ENCODE measurements at regions of chr13 and their contacts with region 1.

Region 1: GRCh38 chr13:33723772-33724435 is 94.0 kb upstream of the RFC3 start:
- DNase-seq: peak; percentile 68 to 84 (median 79)
- ATAC-seq: peak; percentile 80 to 88 (median 85)
- H3K4me3 ChIP-seq: no peak overlapping the region
- H3K27ac ChIP-seq: peak overlapping the region in 11 of 12 donors; percentile 11 to 83 (median 63)
- H3K4me1 ChIP-seq: peaks cover 0 to 54% (median 36%) of the 10 kb centered on the region in 12 donors
- H3K27me3 ChIP-seq: no peaks in the 10 kb centered on the region
- CTCF ChIP-seq: peak; percentile 68 to 88 (median 80)
- POLR2A ChIP-seq: no peak

Region 2: DNA sequence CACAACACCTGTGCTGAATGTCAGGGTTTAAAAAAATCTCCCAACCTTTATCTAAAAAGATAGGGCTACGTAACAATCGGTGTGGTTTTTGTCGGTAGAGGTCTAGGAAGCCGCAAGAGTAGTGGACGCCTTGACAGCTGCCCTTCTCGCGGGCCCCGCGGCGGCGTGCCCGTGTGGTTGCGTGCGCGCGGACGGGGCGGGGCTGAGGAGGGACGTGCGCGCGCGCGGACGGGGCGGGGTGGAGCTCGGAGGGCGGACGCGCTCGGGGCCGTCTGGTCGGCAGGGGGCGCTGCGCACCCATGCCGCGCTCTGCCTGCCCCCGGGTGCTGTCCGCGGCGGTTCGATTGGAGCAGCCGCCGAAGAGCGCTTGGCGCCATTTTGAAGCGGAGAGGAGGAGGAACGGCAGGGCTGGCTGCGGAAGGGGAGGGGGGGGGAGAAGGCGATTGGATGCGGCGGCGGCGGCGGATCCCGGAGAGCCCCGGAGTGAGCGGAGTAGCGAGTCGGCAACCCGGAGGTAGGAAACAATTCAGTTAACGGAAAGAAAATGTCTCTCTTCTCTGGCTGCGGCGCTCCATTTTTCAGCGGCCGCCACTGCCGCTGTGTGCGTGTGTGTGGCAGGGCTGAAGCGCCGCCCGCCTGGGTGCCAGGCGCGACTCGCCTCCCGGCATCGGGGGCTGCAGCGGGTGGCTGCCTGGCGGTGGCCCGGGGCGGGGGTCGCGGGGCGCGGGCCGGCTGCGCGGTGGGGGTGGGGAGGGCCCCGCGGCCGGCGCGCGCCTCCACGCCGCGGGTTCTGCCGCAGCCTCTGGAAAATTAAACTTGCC is 1137.6 kb before region 1 on chr13 and contains the start of gene PDS5B:
- intact Hi-C with region 1: loop called in 6 of 10 experiments (anchors 2 to 10 kb)
- DNase-seq: peak; percentile 95 to 98 (median 96)
- ATAC-seq: peak; percentile 95 to 99 (median 96)
- H3K4me3 ChIP-seq: peak within 1 kb of the TSS; percentile 66 to 95 (median 84)
- H3K27ac ChIP-seq: peak within 1 kb of the TSS; percentile 86 to 96 (median 93)
- H3K4me1 ChIP-seq: peaks cover 0 to 38% (median 27%) of the 10 kb centered on the region in 12 donors
- H3K27me3 ChIP-seq: no peaks in the 10 kb centered on the region
- CTCF ChIP-seq: peak; percentile 66 to 97 (median 94)
- POLR2A ChIP-seq: peak in 1 of 2 donors; percentile 81
- total RNA-seq, gene PDS5B: 12.0 to 28.8 (median 19.4) TPM

Region 3: DNA sequence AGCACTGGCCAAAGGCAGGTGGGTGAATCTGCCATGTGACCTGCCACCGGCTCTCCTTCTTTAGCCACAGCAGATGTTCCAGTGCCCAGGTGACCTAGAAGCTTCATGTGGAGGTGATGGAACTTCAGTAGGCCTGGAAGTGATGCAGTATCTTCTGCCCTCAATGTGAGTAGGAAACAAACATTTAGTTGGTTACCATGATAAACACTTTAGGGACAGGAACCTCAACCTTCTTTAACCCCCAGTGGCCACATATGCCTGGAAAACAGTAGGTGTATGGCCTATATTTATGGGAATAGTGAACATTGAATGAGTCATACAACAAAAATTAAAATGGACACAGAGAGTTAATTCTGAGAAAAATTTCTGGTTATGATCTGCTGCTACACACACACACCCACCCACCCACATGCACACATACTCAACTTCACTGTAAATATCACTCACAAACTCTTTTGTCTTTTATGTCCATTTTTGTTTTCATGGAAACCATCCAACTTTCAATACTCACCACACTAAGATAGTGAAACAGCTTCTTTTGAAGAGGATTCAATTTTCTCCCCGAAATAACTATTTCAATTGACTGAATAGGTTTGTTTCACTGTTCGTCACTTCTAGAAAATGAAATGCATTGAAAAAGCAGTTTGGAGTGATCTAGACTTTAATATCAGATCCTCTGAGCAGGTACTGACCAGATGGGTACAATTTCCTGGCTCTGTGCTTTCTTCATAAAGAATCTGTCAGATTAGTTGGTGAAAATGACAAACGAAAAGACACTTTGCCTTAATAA is 535.6 kb before region 1 on chr13:
- intact Hi-C with region 1: loop called in 1 of 10 experiments (anchors 5 kb)
- DNase-seq: no peak
- ATAC-seq: no peak
- H3K4me3 ChIP-seq: no peak overlapping the region
- H3K27ac ChIP-seq: peak overlapping the region in 9 of 12 donors; percentile 25 to 77 (median 41)
- H3K4me1 ChIP-seq: peaks cover 3 to 91% (median 68%) of the 10 kb centered on the region in 12 donors
- H3K27me3 ChIP-seq: no peaks in the 10 kb centered on the region
- CTCF ChIP-seq: no peak
- POLR2A ChIP-seq: no peak

Region 4: DNA sequence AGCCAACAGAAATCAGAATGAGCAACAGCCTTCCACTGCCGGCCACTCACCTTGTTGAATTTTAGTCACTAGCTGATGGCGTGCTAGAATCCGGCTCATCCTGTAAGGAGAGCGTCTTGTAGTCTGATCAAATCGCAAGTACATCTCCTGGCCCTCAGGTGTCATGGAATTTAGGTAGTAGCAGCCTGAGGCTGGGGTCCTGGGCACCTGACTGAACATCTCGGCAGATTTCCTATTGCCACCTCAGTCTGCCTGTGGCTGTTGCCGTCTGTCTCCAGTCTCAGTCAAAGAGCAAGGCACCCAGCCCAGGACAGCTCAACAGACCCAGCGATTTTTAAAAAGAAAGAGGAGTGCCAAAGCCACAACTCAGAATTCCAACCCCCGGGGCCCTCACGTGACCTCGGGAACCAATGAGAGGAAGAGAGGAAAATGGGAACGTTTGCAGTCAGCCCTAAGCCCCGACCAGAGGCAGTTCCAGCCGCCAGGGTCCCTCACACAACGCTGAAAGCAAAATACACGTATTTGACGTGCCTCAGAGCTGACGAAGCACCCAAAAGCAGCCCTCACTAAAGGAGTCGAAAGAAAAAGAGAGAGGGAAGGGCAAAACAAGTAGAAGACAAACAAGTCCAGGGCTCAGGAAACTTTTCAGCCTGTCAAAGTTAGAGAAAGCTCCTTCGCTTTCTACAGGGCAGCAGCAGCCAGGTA is 438.3 kb before region 1 on chr13 and contains the start of gene STARD13:
- intact Hi-C with region 1: loop called in 1 of 10 experiments (anchors 10 kb)
- DNase-seq: peak; percentile 92 to 96 (median 95)
- ATAC-seq: peak; percentile 93 to 97 (median 95)
- H3K4me3 ChIP-seq: peak within 1 kb of the TSS; percentile 50 to 84 (median 68)
- H3K27ac ChIP-seq: peak within 1 kb of the TSS; percentile 89 to 98 (median 96)
- H3K4me1 ChIP-seq: peaks cover 0 to 56% (median 33%) of the 10 kb centered on the region in 12 donors
- H3K27me3 ChIP-seq: no peaks in the 10 kb centered on the region
- CTCF ChIP-seq: peak in 11 of 12 donors; percentile 11 to 68 (median 46)
- POLR2A ChIP-seq: peak in 1 of 2 donors; percentile 95
- total RNA-seq, gene STARD13: 18.6 to 39.2 (median 31.6) TPM

Region 5: GRCh38 chr13:33610471-33611015 is 113.4 kb before region 1 on chr13:
- intact Hi-C with region 1: loop called in 4 of 10 experiments (anchors 5 to 10 kb)
- DNase-seq: peak; percentile 64 to 89 (median 85)
- ATAC-seq: peak; percentile 86 to 88 (median 87)
- H3K4me3 ChIP-seq: peak overlapping the region in 11 of 12 donors; percentile 3 to 54 (median 40)
- H3K27ac ChIP-seq: peak overlapping the region; percentile 85 to 98 (median 92)
- H3K4me1 ChIP-seq: peaks cover 0 to 55% (median 27%) of the 10 kb centered on the region in 12 donors
- H3K27me3 ChIP-seq: no peaks in the 10 kb centered on the region
- CTCF ChIP-seq: peak in 4 of 12 donors; percentile 11 to 38 (median 19)
- POLR2A ChIP-seq: no peak

Region 6: DNA sequence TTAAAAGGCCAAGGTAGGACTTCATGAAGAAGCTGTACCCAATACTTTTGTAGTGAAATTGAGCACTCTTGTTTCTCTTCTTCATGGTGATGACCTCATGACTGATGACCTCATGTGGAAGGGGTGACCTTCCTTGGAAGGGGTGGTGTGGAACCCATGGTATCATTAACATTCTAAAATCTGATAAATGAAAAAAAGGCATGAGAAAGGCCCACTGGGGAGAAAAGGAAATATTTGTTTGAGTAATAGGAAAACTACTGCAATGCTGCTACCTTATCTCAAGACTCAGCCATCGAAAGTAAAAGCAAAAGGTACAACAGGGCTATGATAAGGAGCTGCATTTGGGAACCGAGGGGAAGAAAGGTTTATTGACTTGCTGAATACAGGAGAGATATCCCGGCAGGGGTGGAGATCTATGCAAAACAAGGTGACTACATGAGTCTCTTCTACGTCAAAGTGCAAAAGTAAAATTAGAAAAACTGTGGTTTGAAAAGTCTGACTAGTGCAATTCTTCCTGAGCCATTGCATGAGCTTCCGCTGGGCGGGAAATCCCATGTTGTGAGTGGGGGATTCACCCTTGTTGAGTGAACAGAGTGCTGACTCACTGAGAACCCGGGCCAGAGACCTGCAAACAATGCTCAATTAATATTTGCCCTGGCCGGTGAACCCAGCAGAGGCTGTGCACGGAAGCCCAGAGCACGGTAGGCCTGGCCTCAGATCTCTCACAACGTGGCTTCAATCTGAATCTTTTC is 44.8 kb before region 1 on chr13:
- intact Hi-C with region 1: loop called in 5 of 10 experiments (anchors 2 to 10 kb)
- DNase-seq: peak; percentile 51 to 66 (median 61)
- ATAC-seq: peak in 3 of 4 donors; percentile 44 to 75 (median 67)
- H3K4me3 ChIP-seq: peak overlapping the region in 6 of 12 donors; percentile 7 to 37 (median 22)
- H3K27ac ChIP-seq: peak overlapping the region in 11 of 12 donors; percentile 16 to 73 (median 49)
- H3K4me1 ChIP-seq: peaks cover 0 to 44% (median 18%) of the 10 kb centered on the region in 12 donors
- H3K27me3 ChIP-seq: no peaks in the 10 kb centered on the region
- CTCF ChIP-seq: no peak
- POLR2A ChIP-seq: no peak

Measured in heart left ventricle (tissue), 16 donors.